Heart right ventricle (tissue), 16 donors: ENCODE measurements at regions of chr10 and their contacts with region 1.

Region 1: GRCh38 chr10:68720793-68721672 is at the start of gene CCAR1:
- DNase-seq: peak; percentile 96 to 98
- ATAC-seq: peak; percentile 99
- H3K4me3 ChIP-seq: peak within 1 kb of the TSS; percentile 85 to 100 (median 93)
- H3K27ac ChIP-seq: peak within 1 kb of the TSS; percentile 83 to 98 (median 94)
- H3K4me1 ChIP-seq: peaks cover 5 to 19% (median 11%) of the 10 kb centered on the region in 9 donors
- H3K27me3 ChIP-seq: no peaks in the 10 kb centered on the region
- CTCF ChIP-seq: no peak
- total RNA-seq, gene CCAR1: 23.5 to 37.1 (median 30.5) TPM

Region 2: GRCh38 chr10:68331455-68332258 is 389.4 kb before region 1 on chr10 and contains the start of gene HNRNPH3:
- intact Hi-C with region 1: loop called in 1 of 10 experiments (anchors 10 kb)
- DNase-seq: peak; percentile 99
- ATAC-seq: peak; percentile 92 to 97 (median 94)
- H3K4me3 ChIP-seq: peak within 1 kb of the TSS; percentile 79 to 96 (median 88)
- H3K27ac ChIP-seq: peak within 1 kb of the TSS; percentile 97 to 100 (median 99)
- H3K4me1 ChIP-seq: peaks cover 0 to 73% (median 42%) of the 10 kb centered on the region in 9 donors
- H3K27me3 ChIP-seq: no peaks in the 10 kb centered on the region
- CTCF ChIP-seq: no peak
- total RNA-seq, gene HNRNPH3: 81.8 to 130 (median 105) TPM

Region 3: GRCh38 chr10:68526626-68527307 is 194.3 kb before region 1 on chr10:
- intact Hi-C with region 1: loop called in 6 of 10 experiments (anchors 1 to 10 kb)
- DNase-seq: no peak
- ATAC-seq: peak in 5 of 8 donors; percentile 1 to 81 (median 57)
- H3K4me3 ChIP-seq: peak overlapping the region; percentile 48 to 98 (median 87)
- H3K27ac ChIP-seq: peak overlapping the region; percentile 27 to 98 (median 93)
- H3K4me1 ChIP-seq: peaks cover 0 to 14% (median 6%) of the 10 kb centered on the region in 9 donors
- H3K27me3 ChIP-seq: no peaks in the 10 kb centered on the region
- CTCF ChIP-seq: no peak

Region 4: GRCh38 chr10:68537796-68538195 is 183.2 kb before region 1 on chr10:
- intact Hi-C with region 1: loop called in 1 of 10 experiments (anchors 10 kb)
- DNase-seq: no peak
- ATAC-seq: no peak
- H3K4me3 ChIP-seq: no peak overlapping the region
- H3K27ac ChIP-seq: no peak overlapping the region
- H3K4me1 ChIP-seq: no peaks in the 10 kb centered on the region
- H3K27me3 ChIP-seq: no peaks in the 10 kb centered on the region
- CTCF ChIP-seq: no peak

Region 5: GRCh38 chr10:68550747-68551411 is 170.2 kb before region 1 on chr10:
- intact Hi-C with region 1: loop called in 4 of 10 experiments (anchors 10 kb)
- DNase-seq: peak in 1 of 2 donors; percentile 58
- ATAC-seq: peak in 6 of 8 donors; percentile 74 to 88 (median 80)
- H3K4me3 ChIP-seq: no peak overlapping the region
- H3K27ac ChIP-seq: no peak overlapping the region
- H3K4me1 ChIP-seq: no peaks in the 10 kb centered on the region
- H3K27me3 ChIP-seq: no peaks in the 10 kb centered on the region
- CTCF ChIP-seq: peak; percentile 69 to 87 (median 76)